ENCODE measurements at regions of chr9 and their contacts with region 1.

Region 1: GRCh38 chr9:127785023-127785932 is 556 bp upstream of the CDK9 start:
- DNase-seq: peak; percentile 87 to 91
- H3K4me3 ChIP-seq: peak overlapping the region; percentile 94
- H3K4me3 Mint-ChIP-seq: peak overlapping the region; percentile 98
- H3K27ac Mint-ChIP-seq: peak overlapping the region; percentile 71
- H3K4me1 ChIP-seq: no peaks in the 10 kb centered on the region
- H3K4me1 Mint-ChIP-seq: no peaks in the 10 kb centered on the region
- H3K27me3 ChIP-seq: no peaks in the 10 kb centered on the region
- H3K27me3 Mint-ChIP-seq: no peaks in the 10 kb centered on the region
- CTCF ChIP-seq: peak; percentile 91 to 92

Region 2: GRCh38 chr9:127586537-127586936 is 198.7 kb before region 1 on chr9:
- CTCF ChIA-PET with region 1: no interaction called
- POLR2A ChIA-PET with region 1: no interaction called
- intact Hi-C with region 1: loop called (anchors 1 kb)
- DNase-seq: peak; percentile 86 to 87
- H3K4me3 ChIP-seq: no peak overlapping the region
- H3K4me3 Mint-ChIP-seq: no peak overlapping the region
- H3K27ac Mint-ChIP-seq: no peak overlapping the region
- H3K4me1 ChIP-seq: peaks cover 5% of the 10 kb centered on the region
- H3K4me1 Mint-ChIP-seq: no peaks in the 10 kb centered on the region
- H3K27me3 ChIP-seq: no peaks in the 10 kb centered on the region; the same call in 1 of the 2 replicates
- H3K27me3 Mint-ChIP-seq: no peaks in the 10 kb centered on the region
- CTCF ChIP-seq: peak; percentile 83 to 93

Region 3: DNA sequence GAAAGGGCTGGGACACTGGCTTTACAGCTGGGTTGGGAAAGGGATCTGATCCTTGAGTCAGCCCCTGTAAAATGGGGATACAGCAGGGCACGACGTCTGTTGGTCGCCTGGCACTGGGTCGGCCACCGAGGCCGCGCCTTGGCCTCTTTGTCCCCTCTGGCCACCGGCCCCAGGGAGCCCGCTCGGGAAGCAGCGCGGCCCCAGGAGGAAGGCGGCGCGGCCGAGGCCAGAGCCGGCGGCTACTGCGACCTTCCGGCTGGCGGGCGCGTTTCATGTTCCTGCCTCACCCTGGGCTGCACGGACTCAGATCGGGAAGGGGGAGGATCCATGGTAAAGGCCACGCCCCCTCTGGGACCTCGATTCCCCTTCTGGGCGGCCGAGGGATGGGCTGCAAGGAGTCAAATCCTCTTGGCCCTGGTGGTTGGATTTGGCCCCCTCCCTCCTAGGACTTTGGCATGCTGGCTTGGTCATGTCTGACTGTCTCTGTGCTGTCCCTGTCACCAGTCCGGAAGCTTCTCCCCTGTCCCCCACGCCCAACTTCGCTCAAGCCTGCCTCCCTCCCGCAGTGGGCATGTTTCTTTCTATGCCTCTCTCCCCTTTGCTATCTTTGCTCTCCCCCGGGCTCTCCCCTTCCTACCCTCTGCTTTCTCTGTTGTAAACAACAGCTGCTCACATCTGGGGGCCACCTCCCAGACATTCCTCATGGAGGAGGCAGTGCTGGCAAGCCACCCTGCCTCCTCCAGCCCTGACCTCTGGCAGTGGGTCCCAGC is 43.2 kb after region 1 on chr9:
- CTCF ChIA-PET with region 1: no interaction called
- POLR2A ChIA-PET with region 1: interaction called, 14 read pairs
- intact Hi-C with region 1: no loop called
- DNase-seq: peak; percentile 76 to 82
- H3K4me3 ChIP-seq: peak overlapping the region; percentile 30
- H3K4me3 Mint-ChIP-seq: peak overlapping the region; percentile 63
- H3K27ac Mint-ChIP-seq: peak overlapping the region; percentile 9
- H3K4me1 ChIP-seq: no peaks in the 10 kb centered on the region
- H3K4me1 Mint-ChIP-seq: peaks cover 10% of the 10 kb centered on the region
- H3K27me3 ChIP-seq: no peaks in the 10 kb centered on the region
- H3K27me3 Mint-ChIP-seq: no peaks in the 10 kb centered on the region
- CTCF ChIP-seq: no peak

Region 4: DNA sequence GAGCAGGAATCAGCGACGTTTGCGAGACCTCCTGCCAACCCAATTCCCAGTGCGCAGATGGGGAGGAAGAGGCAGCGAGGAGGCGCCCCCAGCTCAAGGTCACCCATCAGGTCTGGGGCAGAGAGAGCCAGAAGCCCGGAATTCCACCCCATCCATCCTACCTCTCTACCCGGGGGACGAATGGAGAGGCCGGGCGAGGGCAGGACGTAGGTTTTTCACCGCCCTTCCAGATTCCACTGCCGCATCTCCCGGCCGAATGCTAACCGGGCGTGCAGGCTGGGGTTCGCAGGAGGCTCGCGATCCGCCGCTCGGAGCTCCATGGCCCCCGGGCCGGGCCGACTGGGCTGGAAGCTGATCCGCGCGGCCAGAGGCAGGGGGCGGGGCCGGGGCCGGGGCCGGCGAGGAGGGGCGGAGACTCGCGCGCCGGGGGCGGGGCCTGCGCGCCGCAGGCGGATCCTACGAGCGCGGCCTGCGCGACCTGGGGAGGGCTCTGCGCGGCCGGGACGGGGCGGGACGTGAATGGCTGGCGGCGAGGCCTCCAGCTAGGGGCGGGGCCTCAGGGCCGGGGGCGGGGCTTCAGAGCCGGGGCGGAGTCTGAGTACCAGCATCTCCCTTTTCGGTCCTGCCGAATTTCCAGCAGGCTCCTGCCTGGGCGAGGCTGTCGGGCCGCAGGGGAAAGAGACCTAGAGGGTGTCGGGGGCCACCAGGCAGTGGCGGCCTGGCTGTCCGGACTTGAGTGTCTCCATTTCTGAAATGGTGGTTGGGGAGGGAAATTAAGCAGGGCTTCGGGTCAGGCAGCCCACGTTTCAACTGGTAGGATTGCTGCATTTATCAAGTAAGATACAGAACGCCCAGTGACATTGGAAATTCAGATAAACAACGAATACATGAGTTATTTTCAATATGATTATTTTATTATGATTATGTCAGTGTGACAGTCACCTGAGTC is 131.7 kb after region 1 on chr9 and contains the start of gene ST6GALNAC4:
- CTCF ChIA-PET with region 1: no interaction called
- POLR2A ChIA-PET with region 1: no interaction called
- intact Hi-C with region 1: loop called (anchors 5 kb)
- DNase-seq: peak; percentile 91 to 94
- H3K4me3 ChIP-seq: peak within 1 kb of the TSS; percentile 62
- H3K4me3 Mint-ChIP-seq: peak within 1 kb of the TSS; percentile 72
- H3K27ac Mint-ChIP-seq: no peak within 1 kb of the TSS
- H3K4me1 ChIP-seq: peaks cover 48% of the 10 kb centered on the region
- H3K4me1 Mint-ChIP-seq: peaks cover 7% of the 10 kb centered on the region
- H3K27me3 ChIP-seq: no peaks in the 10 kb centered on the region
- H3K27me3 Mint-ChIP-seq: no peaks in the 10 kb centered on the region
- CTCF ChIP-seq: no peak
- total RNA-seq, gene ST6GALNAC4: 12.1 and 13.2 TPM in 2 replicates